ENCODE measurements at regions of chr12 and their contacts with region 1.

Region 1: GRCh38 chr12:118372541-118373495 is at the start of gene TAOK3:
- DNase-seq: peak; percentile 91
- ATAC-seq: peak; percentile 85
- H3K4me3 ChIP-seq: peak within 1 kb of the TSS; percentile 92
- H3K27ac ChIP-seq: peak within 1 kb of the TSS; percentile 76
- H3K4me1 ChIP-seq: peaks cover 3% of the 10 kb centered on the region; the same call in 1 of the 2 replicates
- H3K27me3 ChIP-seq: no peaks in the 10 kb centered on the region
- CTCF ChIP-seq: no peak
- EP300 ChIP-seq: no peak
- POLR2A ChIP-seq: peak; percentile 96
- RAD21 ChIP-seq: no peak
- polyA plus RNA-seq, gene TAOK3: 41.3 to 42.5 TPM

Region 2: DNA sequence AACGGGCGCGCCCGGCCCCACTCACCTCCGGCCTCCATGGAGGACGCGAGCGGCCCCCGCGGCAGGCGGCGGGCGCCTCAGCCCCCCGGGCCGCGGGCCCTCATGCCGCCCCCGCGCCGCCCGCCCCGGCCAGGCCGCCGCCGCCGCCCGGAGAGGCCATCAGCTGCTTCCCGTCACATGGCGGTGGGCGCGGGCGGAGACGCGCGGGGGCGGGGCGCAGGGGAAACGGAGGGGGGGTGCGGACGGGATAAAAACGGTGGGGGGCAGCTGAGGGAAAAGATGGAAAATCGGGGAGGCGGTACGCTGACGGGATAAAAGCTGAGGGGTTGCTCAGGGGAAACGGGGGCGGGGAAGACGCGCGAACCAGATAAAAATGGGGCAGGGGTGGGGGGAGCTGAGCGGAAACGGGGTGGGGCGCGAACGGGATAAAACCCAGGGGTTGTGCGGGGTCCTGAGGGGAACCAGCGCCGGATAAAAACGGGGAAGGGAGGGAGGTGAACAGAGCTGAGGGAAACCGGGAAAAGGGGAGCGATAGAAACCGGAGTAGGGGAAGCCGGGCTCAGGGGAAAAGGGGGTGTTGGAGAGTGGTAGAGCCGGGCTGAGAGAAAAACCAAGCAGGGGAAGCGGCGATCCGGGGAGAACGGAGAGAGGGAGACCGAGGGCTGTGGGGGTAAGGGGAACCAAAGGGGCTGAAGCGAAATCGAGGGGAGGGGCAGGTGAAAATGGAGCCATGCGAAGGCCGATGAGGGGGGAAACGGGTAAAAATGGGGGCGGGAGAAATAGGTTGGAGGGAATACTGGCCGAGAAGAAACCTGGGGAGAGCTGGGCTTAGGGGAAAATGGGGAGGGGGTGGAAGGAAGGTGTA is 311.6 kb before region 1 on chr12 and contains the start of gene WSB2:
- CTCF ChIA-PET with region 1: interaction called, 13 read pairs
- POLR2A ChIA-PET with region 1: interaction called, 3 read pairs
- RAD21 ChIA-PET with region 1: interaction called, 4 read pairs
- SMC1A ChIA-PET with region 1: interaction called, 6 read pairs
- in situ Hi-C with region 1: no loop called
- intact Hi-C with region 1: loop called (anchors 2 kb)
- DNase-seq: no peak
- ATAC-seq: peak; percentile 40
- H3K4me3 ChIP-seq: peak within 1 kb of the TSS; percentile 96
- H3K27ac ChIP-seq: peak within 1 kb of the TSS; percentile 93
- H3K4me1 ChIP-seq: peaks cover 13% of the 10 kb centered on the region
- H3K27me3 ChIP-seq: no peaks in the 10 kb centered on the region
- CTCF ChIP-seq: no peak
- EP300 ChIP-seq: no peak
- POLR2A ChIP-seq: peak; percentile 50; the same call in 1 of the 2 replicates
- RAD21 ChIP-seq: no peak
- polyA plus RNA-seq, gene WSB2: 30.0 to 33.6 TPM

Region 3: DNA sequence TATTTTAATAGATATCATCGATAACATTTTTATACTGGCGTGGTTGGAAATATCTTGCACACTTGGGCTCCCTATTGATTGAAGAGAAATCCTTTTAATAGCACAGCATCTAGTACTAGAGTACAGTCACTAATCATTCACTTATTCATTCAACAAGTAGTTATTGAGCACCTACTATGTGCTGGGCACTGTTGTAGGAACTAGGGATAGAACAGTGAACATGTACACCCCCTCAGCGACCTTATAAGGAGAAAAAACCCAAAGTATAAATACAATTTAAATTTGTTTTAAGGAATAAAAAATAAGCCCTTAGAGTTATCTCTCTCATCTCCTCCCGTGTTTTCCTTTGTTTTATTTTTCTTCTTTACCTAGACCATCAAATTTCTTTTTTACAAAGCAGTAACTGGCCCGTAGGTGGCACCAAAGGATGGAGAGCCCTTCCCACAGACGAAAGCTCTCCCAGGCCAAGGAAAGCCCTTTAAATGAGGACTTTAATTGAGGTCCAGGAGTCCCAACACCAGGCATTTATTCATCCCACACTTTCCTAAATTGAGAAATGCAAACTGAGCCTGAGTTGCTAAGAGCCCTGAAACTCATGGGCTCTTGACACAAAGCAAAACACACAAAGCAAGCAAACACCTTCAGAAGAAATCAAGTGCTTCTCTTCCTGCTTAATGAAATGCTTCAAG is 207.9 kb before region 1 on chr12:
- CTCF ChIA-PET with region 1: interaction called, 132 read pairs
- POLR2A ChIA-PET with region 1: interaction called, 7 read pairs
- RAD21 ChIA-PET with region 1: interaction called, 72 read pairs
- SMC1A ChIA-PET with region 1: interaction called, 73 read pairs
- in situ Hi-C with region 1: no loop called
- intact Hi-C with region 1: loop called (anchors 5 kb)
- DNase-seq: no peak
- ATAC-seq: 0 out of 3 replicates have a peak, but pooled peaks have one; percentile 13
- H3K4me3 ChIP-seq: no peak overlapping the region
- H3K27ac ChIP-seq: no peak overlapping the region
- H3K4me1 ChIP-seq: peaks cover 24% of the 10 kb centered on the region
- H3K27me3 ChIP-seq: no peaks in the 10 kb centered on the region
- CTCF ChIP-seq: peak; percentile 45 to 56 (median 45)
- EP300 ChIP-seq: no peak
- POLR2A ChIP-seq: no peak
- RAD21 ChIP-seq: peak; percentile 72

Region 4: DNA sequence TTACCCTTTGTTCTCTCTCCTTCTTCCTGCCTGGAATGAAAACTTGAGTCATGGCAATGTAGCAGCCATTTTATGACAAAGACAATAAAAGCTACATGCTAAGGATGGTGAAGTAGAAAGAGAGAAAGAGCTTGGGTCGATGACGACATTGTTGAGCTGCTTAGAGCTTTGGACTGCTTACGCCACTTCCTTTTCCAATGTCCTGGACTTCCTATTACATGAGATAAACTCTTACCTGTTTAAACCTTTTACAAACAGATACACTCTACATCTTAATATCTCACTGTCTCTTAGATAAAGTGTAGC is 166.8 kb before region 1 on chr12:
- CTCF ChIA-PET with region 1: interaction called, 27 read pairs
- POLR2A ChIA-PET with region 1: interaction called, 4 read pairs
- RAD21 ChIA-PET with region 1: interaction called, 32 read pairs
- SMC1A ChIA-PET with region 1: interaction called, 13 read pairs
- in situ Hi-C with region 1: no loop called
- intact Hi-C with region 1: no loop called
- DNase-seq: no peak
- ATAC-seq: peak; percentile 14
- H3K4me3 ChIP-seq: no peak overlapping the region
- H3K27ac ChIP-seq: peak overlapping the region; percentile 51
- H3K4me1 ChIP-seq: peaks cover 8% of the 10 kb centered on the region
- H3K27me3 ChIP-seq: no peaks in the 10 kb centered on the region
- CTCF ChIP-seq: no peak
- EP300 ChIP-seq: no peak
- POLR2A ChIP-seq: no peak
- RAD21 ChIP-seq: no peak

Region 5: GRCh38 chr12:118271790-118272417 is 100.9 kb before region 1 on chr12:
- CTCF ChIA-PET with region 1: interaction called, 12 read pairs
- POLR2A ChIA-PET with region 1: no interaction called
- RAD21 ChIA-PET with region 1: interaction called, 4 read pairs
- SMC1A ChIA-PET with region 1: interaction called, 9 read pairs
- in situ Hi-C with region 1: no loop called
- intact Hi-C with region 1: no loop called
- DNase-seq: no peak
- ATAC-seq: no peak
- H3K4me3 ChIP-seq: no peak overlapping the region
- H3K27ac ChIP-seq: no peak overlapping the region
- H3K4me1 ChIP-seq: no peaks in the 10 kb centered on the region
- H3K27me3 ChIP-seq: no peaks in the 10 kb centered on the region
- CTCF ChIP-seq: no peak
- EP300 ChIP-seq: no peak
- POLR2A ChIP-seq: no peak
- RAD21 ChIP-seq: no peak

Region 6: GRCh38 chr12:118312578-118312977 is 60.2 kb before region 1 on chr12:
- CTCF ChIA-PET with region 1: interaction called, 24 read pairs
- POLR2A ChIA-PET with region 1: interaction called, 7 read pairs
- RAD21 ChIA-PET with region 1: interaction called, 23 read pairs
- SMC1A ChIA-PET with region 1: interaction called, 23 read pairs
- in situ Hi-C with region 1: no loop called
- intact Hi-C with region 1: loop called (anchors 2 kb)
- DNase-seq: peak; percentile 73
- ATAC-seq: peak; percentile 87
- H3K4me3 ChIP-seq: peak overlapping the region; percentile 47; the same call in 1 of the 2 replicates
- H3K27ac ChIP-seq: peak overlapping the region; percentile 82
- H3K4me1 ChIP-seq: peaks cover 40% of the 10 kb centered on the region
- H3K27me3 ChIP-seq: no peaks in the 10 kb centered on the region
- CTCF ChIP-seq: no peak
- EP300 ChIP-seq: peak in 1 of 2 experiments; percentile 38; a peak in 2 of 4 replicates
- POLR2A ChIP-seq: no peak
- RAD21 ChIP-seq: no peak

Region 7: DNA sequence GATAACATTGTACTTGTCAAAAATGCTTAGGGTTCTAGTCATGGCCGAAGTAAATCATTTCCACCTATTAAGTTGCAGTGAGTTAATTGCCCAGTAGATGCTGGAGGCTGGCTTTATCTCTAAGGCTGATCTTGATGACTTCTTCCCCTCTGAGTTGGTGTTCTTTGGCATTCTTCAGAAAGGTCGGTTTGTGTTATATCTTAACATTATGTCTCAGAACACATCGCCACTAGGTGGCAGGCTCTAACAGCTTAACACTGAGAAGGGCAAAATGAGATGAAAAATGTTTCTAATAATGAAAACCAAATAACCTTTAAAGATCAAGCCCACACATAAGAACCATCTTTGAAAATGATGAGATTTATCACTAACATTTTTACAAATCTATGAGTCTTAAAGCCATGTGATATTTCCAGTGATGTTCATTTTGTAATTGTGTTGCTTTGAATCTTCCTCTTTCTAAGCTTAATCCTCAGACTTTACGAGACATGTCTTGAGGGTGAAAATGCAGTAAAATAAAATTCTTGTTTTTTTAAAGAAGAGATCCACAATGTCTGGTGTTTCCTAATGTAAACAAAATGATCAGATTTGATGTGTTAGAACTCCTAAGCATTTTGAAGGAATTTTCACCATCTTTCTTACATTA is 32.2 kb after region 1 on chr12:
- CTCF ChIA-PET with region 1: interaction called, 17 read pairs
- POLR2A ChIA-PET with region 1: no interaction called
- RAD21 ChIA-PET with region 1: interaction called, 3 read pairs
- SMC1A ChIA-PET with region 1: no interaction called
- in situ Hi-C with region 1: no loop called
- intact Hi-C with region 1: no loop called
- DNase-seq: peak; percentile 4
- ATAC-seq: peak; percentile 86
- H3K4me3 ChIP-seq: no peak overlapping the region
- H3K27ac ChIP-seq: no peak overlapping the region
- H3K4me1 ChIP-seq: no peaks in the 10 kb centered on the region
- H3K27me3 ChIP-seq: no peaks in the 10 kb centered on the region
- CTCF ChIP-seq: peak; percentile 68 to 76 (median 73)
- EP300 ChIP-seq: no peak
- POLR2A ChIP-seq: no peak
- RAD21 ChIP-seq: peak; percentile 80